ENCODE measurements at regions of chr19 and their contacts with region 1.

Region 1: GRCh38 chr19:7340959-7341837 is 7.5 kb upstream of the ARHGEF18 start:
- DNase-seq: peak; percentile 66 to 92 (median 78)
- ATAC-seq: peak; percentile 86
- H3K4me3 ChIP-seq: no peak overlapping the region
- H3K27ac ChIP-seq: no peak overlapping the region
- H3K4me1 ChIP-seq: peaks cover 0 to 56% of the 10 kb centered on the region in 2 donors
- H3K27me3 ChIP-seq: no peaks in the 10 kb centered on the region
- CTCF ChIP-seq: peak; percentile 92

Region 2: GRCh38 chr19:7104747-7105447 is 236.3 kb before region 1 on chr19:
- intact Hi-C with region 1: loop called in 1 of 2 experiments (anchors 5 kb)
- DNase-seq: peak in 1 of 4 donors; percentile 42
- ATAC-seq: no peak
- H3K4me3 ChIP-seq: no peak overlapping the region
- H3K27ac ChIP-seq: no peak overlapping the region
- H3K4me1 ChIP-seq: peaks cover 0 to under 1% of the 10 kb centered on the region in 2 donors
- H3K27me3 ChIP-seq: peaks cover 0 to 2% of the 10 kb centered on the region in 2 donors
- CTCF ChIP-seq: no peak

Region 3: GRCh38 chr19:7159105-7159933 is 181.9 kb before region 1 on chr19:
- intact Hi-C with region 1: loop called in 1 of 2 experiments (anchors 10 kb)
- DNase-seq: peak in 2 of 4 donors; percentile 33 to 53
- ATAC-seq: peak; percentile 65
- H3K4me3 ChIP-seq: no peak overlapping the region
- H3K27ac ChIP-seq: peak overlapping the region; percentile 35 to 65
- H3K4me1 ChIP-seq: peaks cover 0 to 15% of the 10 kb centered on the region in 2 donors
- H3K27me3 ChIP-seq: no peaks in the 10 kb centered on the region
- CTCF ChIP-seq: no peak

Region 4: DNA sequence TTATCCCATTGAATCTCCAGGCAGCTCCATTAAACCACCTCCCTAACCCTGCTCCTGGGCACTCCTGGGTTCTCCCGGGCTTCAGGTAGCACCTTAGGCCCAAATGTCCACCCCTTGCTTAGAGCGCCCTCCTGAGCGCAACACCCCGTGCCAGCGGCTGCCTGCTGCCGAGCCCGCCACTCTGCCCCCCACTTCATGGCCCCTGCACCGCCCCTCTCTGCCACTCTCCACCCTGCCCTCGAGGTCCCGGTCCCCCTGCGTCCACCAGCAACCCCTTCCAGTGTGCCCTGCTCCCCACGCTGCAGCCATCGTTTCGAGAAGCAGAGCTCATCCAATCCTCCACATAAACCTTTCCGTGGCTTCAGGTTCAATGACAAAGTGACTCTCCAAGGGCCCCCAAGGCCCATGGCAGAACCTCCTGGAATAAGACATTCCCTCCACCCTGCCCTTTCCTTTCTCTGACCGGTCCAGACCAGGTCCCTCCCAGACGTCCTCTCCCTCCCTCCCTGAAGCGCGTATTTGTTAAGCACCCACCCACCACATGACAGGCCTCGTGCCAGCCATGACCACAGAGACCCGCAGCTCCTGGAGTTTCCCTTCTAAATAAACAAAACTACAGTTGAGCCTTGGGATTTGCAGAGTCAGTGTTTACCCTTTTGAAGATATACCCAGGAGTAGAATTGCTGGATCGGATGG is 74.1 kb after region 1 on chr19:
- intact Hi-C with region 1: no loop called
- DNase-seq: peak in 2 of 4 donors; percentile 59 to 80
- ATAC-seq: peak; percentile 69
- H3K4me3 ChIP-seq: no peak overlapping the region
- H3K27ac ChIP-seq: peak overlapping the region; percentile 23 to 56
- H3K4me1 ChIP-seq: peaks cover 8 to 12% of the 10 kb centered on the region in 2 donors
- H3K27me3 ChIP-seq: no peaks in the 10 kb centered on the region
- CTCF ChIP-seq: no peak

Region 5: DNA sequence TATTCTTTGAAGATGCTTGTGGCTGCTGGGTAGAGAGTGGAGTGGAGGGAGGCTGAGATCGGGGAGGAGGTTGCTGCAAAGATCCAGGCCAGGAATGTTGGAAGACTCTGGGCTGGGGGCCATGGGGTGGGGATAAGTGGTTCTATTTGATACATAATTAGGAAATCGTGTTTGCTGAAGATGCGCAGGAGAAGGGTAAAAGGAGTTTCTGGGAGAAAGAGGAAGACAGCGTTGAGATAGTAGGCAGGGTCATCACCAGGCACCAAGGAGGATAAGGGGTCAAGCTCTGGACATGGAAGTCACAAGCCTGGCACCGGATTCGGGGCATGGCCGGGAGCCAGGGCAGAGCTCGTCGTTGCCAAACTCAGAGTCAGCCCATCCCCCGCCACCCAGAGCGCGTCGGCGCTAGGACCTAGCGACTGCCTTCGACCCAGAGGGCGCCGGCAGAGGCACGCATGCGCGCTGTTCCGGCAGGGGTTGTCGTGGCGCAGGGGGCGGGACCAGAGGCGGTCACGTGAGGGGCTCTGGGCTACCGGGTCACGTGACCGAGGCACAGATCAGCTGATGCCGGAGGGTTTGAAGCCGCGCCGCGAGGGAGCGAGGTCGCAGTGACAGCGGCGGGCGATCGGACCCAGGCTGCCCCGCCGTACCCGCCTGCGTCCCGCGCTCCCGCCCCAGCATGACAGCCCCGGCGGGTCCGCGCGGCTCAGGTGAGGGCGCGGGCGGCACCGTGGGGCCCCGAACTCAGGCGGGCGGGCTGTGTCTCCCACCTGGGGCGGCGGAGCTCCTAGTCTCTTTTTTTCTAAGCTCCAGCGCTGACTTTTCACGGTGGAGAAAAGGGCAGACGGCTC is 181.1 kb after region 1 on chr19 and contains the start of gene MCOLN1:
- intact Hi-C with region 1: no loop called
- DNase-seq: peak; percentile 97 to 100 (median 100)
- ATAC-seq: peak; percentile 96
- H3K4me3 ChIP-seq: peak within 1 kb of the TSS; percentile 92 to 93
- H3K27ac ChIP-seq: peak within 1 kb of the TSS; percentile 40 to 73
- H3K4me1 ChIP-seq: peaks cover 7 to 41% of the 10 kb centered on the region in 2 donors
- H3K27me3 ChIP-seq: peaks cover 0 to 7% of the 10 kb centered on the region in 2 donors
- CTCF ChIP-seq: no peak
- polyA plus RNA-seq, gene MCOLN1: 13.0 to 17.2 (median 14.3) TPM

Measured in left lung (tissue), 14 donors.